B cell (primary cell): ENCODE measurements at regions of chr2 and their contacts with region 1.

Region 1: GRCh38 chr2:222840060-222840802 is 20.6 kb upstream of the ACSL3 start:
- DNase-seq: no peak
- ATAC-seq: no peak
- H3K4me3 ChIP-seq: no peak overlapping the region
- H3K4me3 Mint-ChIP-seq: no peak overlapping the region
- H3K27ac ChIP-seq: no peak overlapping the region
- H3K27ac Mint-ChIP-seq: no peak overlapping the region
- H3K4me1 ChIP-seq: no peaks in the 10 kb centered on the region
- H3K4me1 Mint-ChIP-seq: no peaks in the 10 kb centered on the region
- H3K27me3 ChIP-seq: peaks cover 0 to 3% (median 0%) of the 10 kb centered on the region in 4 experiments
- H3K27me3 Mint-ChIP-seq: peaks cover 28% of the 10 kb centered on the region
- CTCF ChIP-seq: no peak

Region 2: DNA sequence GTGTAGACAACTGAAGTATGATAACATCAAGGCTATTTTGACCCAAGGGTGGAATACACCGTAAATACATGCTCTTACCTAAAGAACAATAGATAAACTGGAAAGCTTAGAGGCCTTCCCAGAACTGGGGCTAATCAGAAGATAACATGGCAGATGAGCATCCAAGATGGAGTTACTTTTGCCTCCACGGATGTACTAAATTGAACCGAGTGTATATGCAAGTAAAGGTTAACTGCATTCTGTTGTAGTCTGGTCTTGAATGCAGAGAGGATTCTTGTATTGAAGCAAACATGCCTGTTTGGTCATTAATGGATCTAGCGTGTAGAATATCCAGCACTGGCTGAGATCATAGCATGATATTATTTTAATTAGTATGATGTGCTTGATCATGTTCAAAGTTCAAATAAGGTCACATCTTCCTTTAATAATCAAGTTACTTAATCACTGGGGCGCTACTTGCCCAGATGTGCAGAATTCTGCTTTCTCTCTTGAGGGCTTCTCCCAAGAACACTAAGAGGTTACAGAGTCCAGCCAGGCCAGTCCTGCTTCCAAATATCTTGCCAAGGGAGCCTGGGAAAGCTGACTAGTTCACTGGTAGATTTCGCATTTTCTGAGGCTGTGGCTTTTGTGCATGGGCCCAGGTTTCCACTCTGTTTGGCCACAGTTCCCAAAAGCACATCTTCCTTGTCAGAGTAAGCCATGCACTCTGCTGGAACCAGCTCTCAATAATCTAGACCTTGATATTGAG is 16.9 kb before region 1 on chr2:
- CTCF ChIA-PET with region 1: interaction called, 3 read pairs
- POLR2A ChIA-PET with region 1: no interaction called
- intact Hi-C with region 1: loop called (anchors 2 kb)
- DNase-seq: no peak
- ATAC-seq: no peak
- H3K4me3 ChIP-seq: no peak overlapping the region
- H3K4me3 Mint-ChIP-seq: no peak overlapping the region
- H3K27ac ChIP-seq: no peak overlapping the region
- H3K27ac Mint-ChIP-seq: no peak overlapping the region
- H3K4me1 ChIP-seq: no peaks in the 10 kb centered on the region
- H3K4me1 Mint-ChIP-seq: no peaks in the 10 kb centered on the region
- H3K27me3 ChIP-seq: no peaks in the 10 kb centered on the region
- H3K27me3 Mint-ChIP-seq: peaks cover 3% of the 10 kb centered on the region
- CTCF ChIP-seq: no peak